HCT116 (cell line): ENCODE measurements at regions of chr11 and their contacts with region 1.

Region 1: DNA sequence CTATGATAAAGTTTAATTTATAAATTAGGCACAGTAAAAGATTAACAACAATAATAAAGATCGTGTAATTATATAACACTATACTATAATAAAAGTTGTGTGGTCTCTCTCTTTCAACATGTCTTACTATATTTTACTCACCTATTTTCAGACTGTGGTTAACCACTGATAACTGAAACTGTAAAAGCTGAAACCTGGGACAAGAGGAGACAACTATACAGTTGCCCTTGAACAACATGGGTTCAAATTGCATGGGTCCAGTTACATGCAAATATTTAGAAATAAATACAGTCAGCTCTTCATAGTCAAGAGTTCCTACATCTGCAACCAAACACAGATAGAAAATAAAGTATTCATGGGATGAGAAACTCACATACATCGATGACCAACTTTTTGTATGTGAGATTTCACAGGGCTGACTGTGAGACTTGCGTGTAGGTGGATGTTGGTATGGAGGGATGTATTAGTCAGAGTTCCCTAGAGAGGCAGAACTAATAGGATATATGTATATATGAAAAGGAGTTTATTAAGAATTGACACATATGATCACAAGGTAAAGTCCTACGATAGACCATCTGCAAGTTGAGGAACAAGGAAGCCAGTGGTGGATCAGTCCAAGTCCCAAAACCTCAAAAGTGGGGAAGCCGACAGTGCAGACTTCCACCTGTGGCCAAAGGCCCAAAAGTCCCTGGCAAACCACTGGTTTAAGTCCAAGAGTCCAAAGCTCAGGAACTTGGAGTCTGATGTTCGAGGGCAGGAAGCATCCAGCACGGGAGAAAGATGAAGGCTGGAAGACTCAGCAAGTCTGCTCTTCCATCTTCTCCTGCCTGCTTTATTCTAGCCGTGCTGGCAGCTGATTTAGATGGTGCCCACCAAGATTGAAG is 359.5 kb downstream of the INSC start:
- DNase-seq: no peak
- ATAC-seq: no peak
- H3K4me3 ChIP-seq: no peak overlapping the region
- H3K27ac ChIP-seq: no peak overlapping the region
- H3K4me1 ChIP-seq: no peaks in the 10 kb centered on the region
- H3K27me3 ChIP-seq: peaks cover 16% of the 10 kb centered on the region
- CTCF ChIP-seq: no peak
- POLR2A ChIP-seq: no peak
- RAD21 ChIP-seq: no peak

Region 2: DNA sequence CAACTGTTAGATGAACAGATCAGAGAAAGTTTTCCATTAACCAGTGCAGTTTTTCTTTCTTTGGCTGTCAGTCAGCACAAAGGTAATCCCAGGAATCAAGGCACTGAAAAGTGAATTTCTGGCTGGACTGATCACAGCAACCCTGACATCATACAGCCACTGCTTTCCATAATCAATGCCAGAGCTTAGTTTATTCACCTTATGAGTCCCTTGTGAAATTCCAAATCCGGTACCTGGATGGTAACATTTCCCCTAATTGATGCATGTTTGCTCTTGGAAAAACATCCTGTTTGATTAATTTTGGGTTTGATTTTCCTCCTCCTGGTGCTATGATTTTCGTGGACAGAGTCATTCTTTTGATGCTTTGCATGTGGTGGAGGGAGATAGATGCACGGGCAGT is 39.7 kb before region 1 on chr11:
- CTCF ChIA-PET with region 1: no interaction called
- POLR2A ChIA-PET with region 1: no interaction called
- RAD21 ChIA-PET with region 1: no interaction called
- intact Hi-C with region 1: loop called (anchors 1 kb)
- DNase-seq: no peak
- ATAC-seq: no peak
- H3K4me3 ChIP-seq: no peak overlapping the region
- H3K27ac ChIP-seq: no peak overlapping the region
- H3K4me1 ChIP-seq: no peaks in the 10 kb centered on the region
- H3K27me3 ChIP-seq: peaks cover 13% of the 10 kb centered on the region
- CTCF ChIP-seq: no peak
- POLR2A ChIP-seq: no peak
- RAD21 ChIP-seq: no peak